ENCODE measurements at regions of chr3 and their contacts with region 1.

Region 1: DNA sequence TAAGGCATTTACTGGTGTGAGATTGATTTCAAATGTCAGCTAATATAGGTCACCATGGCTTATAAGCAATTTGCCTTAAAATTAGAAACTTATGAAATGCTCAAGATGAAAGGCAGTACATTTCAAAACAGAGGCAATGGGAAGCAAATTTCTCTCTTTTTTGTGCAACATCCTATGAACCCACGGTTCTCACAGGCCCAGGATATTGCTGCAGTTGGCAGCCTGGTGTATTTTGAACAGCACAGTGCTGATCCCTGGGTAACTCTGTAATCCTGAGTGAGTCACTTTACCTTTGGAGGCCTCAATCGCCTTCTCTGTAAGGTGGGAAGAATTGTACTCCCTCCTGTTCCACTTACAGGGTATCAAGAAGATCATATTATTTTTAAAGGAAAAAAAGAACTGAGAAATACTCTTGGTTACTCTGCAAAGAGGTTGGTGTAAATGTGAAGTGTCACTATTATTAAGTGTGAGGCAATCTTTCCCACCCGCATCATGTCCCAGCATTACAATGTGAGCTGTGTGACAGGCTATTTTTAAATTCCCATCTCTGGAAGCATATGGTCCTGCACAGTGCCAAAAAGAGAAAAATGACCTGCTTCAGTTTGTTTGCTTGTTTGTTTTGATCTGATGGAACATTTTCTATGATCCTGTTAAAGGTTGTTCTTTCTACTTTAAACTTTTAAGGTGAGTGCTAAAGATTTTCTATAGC is 190.1 kb upstream of the LPP start:
- DNase-seq: no peak
- H3K4me3 Mint-ChIP-seq: no peak overlapping the region
- H3K27ac Mint-ChIP-seq: peak overlapping the region; percentile 9
- H3K4me1 Mint-ChIP-seq: peaks cover 25% of the 10 kb centered on the region
- H3K27me3 Mint-ChIP-seq: peaks cover 4% of the 10 kb centered on the region

Region 2: GRCh38 chr3:187935623-187936156 is 28.1 kb before region 1 on chr3:
- intact Hi-C with region 1: loop called (anchors 2 kb)
- DNase-seq: no peak
- H3K4me3 Mint-ChIP-seq: no peak overlapping the region
- H3K27ac Mint-ChIP-seq: peak overlapping the region; percentile 33
- H3K4me1 Mint-ChIP-seq: peaks cover 33% of the 10 kb centered on the region
- H3K27me3 Mint-ChIP-seq: peaks cover 26% of the 10 kb centered on the region

Region 3: GRCh38 chr3:188006726-188007393 is 43.0 kb after region 1 on chr3:
- intact Hi-C with region 1: no loop called
- DNase-seq: no peak
- H3K4me3 Mint-ChIP-seq: no peak overlapping the region
- H3K27ac Mint-ChIP-seq: no peak overlapping the region
- H3K4me1 Mint-ChIP-seq: peaks cover 27% of the 10 kb centered on the region
- H3K27me3 Mint-ChIP-seq: peaks cover 4% of the 10 kb centered on the region

Measured in activated T-helper 2 cell treated with anti-CD3 and anti-CD28 coated beads, Interferon-gamma antibody, Interleukin-2, Interleukin-4, amounts not matched to agents 10 μg/mL and 5 μg/mL and 100 μg/mL, durations not matched to agents 14 hours and 24 hours and 36 hours (primary cell).